ENCODE measurements at regions of chr10 and their contacts with region 1.

Region 1: DNA sequence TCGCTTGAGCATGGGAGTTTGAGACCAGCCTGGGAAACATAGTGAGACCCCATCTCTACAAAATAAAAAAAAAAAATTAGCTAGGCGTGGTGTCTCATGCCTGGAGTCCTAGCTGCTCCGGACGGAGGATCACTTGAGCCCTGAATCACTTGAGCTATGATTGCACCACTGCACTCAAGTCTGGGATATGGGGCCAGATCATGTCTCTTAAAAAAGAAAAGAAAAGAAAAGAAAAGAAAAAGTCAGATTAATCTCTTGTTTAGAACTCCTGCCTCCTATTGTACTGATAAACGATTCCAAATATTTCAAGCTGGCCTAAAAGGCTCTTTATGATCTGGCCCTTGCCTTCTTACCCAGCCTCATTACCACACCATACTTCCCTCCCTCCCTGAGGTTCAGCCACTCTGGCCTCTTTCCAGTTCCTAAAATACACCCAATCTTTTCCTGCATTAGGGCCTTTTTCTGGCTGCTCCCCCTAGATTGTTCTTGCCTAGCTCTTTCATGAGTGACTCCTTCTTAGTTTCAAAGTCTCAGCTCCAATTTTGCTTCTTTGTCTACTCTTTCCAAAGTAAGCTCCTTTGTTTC is 41.7 kb downstream of the VCL start:
- DNase-seq: peak; percentile 68 to 78
- ATAC-seq: peak; percentile 93 to 96
- H3K4me3 ChIP-seq: peak overlapping the region; percentile 22 to 46 (median 26)
- H3K27ac ChIP-seq: peak overlapping the region; percentile 93 to 97 (median 95)
- H3K4me1 ChIP-seq: peaks cover 66 to 76% of the 10 kb centered on the region in 2 donors
- H3K27me3 ChIP-seq: no peaks in the 10 kb centered on the region
- CTCF ChIP-seq: no peak
- POLR2A ChIP-seq: no peak

Region 2: DNA sequence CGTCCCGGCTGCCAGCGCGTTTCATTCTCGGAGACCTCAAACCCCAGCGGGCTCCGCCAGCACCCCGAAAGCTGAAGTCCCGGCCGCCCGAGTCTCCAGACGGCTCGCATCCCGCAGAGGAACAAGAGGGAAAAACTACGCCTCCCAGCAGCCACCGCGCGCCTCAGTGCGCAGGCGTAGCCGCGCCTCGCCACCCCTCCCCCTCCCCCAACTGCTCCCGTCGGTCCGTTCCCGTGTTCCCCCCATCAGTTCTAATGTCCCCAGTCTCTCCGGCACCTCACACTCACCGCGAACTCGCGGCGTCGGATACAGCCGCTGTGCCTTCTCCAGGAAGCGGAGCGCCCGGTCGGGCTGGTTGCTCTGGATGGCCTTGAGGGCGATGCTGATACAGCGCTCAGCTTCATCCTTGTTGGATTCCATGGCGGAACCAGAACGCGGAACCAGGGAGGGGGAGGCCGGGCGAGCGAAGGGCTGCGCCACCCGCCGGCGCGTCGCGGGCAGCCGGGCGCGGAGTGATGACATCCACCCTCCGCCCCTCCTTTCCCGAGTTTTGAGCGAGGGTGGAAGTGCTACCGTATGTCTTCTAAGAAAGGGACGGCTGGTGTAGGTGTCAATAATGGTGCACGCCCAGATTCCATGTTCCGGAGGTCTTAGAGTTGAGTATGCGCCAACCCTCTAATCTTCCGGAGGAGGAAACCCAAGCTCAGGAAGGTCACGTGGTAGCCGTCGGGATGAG is 1685.0 kb before region 1 on chr10 and contains the start of gene DNAJB12:
- in situ Hi-C with region 1: no loop called
- intact Hi-C with region 1: loop called (anchors 5 kb)
- DNase-seq: peak; percentile 75 to 85
- ATAC-seq: peak; percentile 85 to 87
- H3K4me3 ChIP-seq: peak within 1 kb of the TSS; percentile 83 to 95 (median 86)
- H3K27ac ChIP-seq: peak within 1 kb of the TSS; percentile 93 to 100 (median 98)
- H3K4me1 ChIP-seq: peaks cover 20 to 24% of the 10 kb centered on the region in 2 donors
- H3K27me3 ChIP-seq: no peaks in the 10 kb centered on the region
- CTCF ChIP-seq: peak in 1 of 5 experiments; percentile 13
- POLR2A ChIP-seq: peak; percentile 74 to 81
- total RNA-seq, gene DNAJB12: 35.8 to 49.7 (median 39.0) TPM

Region 3: DNA sequence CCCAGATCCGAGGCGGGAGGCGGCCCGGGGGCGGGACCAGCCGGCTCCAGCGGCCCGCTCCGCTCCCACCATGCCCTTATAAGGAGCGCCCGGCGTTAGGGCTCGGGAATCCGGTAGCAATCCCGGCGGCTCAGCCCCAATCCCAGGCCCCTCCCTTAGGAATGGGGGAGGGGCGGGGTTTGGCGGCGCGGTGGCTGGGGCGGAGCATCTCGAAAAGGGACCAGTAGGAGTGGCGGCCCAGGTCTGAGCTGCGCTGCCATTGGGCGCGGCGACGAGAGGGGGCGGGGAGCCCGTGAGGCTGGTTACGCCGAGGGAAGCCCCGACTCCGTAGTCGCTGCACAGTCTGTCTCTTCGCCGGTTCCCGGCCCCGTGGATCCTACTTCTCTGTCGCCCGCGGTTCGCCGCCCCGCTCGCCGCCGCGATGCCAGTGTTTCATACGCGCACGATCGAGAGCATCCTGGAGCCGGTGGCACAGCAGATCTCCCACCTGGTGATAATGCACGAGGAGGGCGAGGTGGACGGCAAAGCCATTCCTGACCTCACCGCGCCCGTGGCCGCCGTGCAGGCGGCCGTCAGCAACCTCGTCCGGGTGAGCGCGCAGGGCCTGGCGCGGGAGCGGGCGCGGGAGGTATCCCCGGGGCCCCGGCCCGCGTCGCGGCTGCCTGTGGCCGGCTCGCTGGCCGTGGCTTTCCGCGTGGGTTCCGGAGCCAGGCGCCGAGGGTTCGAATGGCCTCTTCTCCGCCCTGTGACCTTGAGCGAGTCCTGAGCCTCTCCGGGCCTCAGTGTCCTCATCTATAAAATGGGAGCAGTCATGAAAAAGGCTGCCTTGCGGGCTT is 41.6 kb before region 1 on chr10 and contains the start of gene VCL:
- in situ Hi-C with region 1: no loop called
- intact Hi-C with region 1: loop called (anchors 2 kb)
- DNase-seq: peak; percentile 98 to 99
- ATAC-seq: peak; percentile 90
- H3K4me3 ChIP-seq: peak within 1 kb of the TSS; percentile 77 to 88 (median 86)
- H3K27ac ChIP-seq: peak within 1 kb of the TSS; percentile 86 to 97 (median 92)
- H3K4me1 ChIP-seq: peaks cover 32 to 35% of the 10 kb centered on the region in 2 donors
- H3K27me3 ChIP-seq: no peaks in the 10 kb centered on the region
- CTCF ChIP-seq: no peak
- POLR2A ChIP-seq: peak; percentile 97 to 99
- total RNA-seq, gene VCL: 129 to 299 (median 210) TPM

Region 4: DNA sequence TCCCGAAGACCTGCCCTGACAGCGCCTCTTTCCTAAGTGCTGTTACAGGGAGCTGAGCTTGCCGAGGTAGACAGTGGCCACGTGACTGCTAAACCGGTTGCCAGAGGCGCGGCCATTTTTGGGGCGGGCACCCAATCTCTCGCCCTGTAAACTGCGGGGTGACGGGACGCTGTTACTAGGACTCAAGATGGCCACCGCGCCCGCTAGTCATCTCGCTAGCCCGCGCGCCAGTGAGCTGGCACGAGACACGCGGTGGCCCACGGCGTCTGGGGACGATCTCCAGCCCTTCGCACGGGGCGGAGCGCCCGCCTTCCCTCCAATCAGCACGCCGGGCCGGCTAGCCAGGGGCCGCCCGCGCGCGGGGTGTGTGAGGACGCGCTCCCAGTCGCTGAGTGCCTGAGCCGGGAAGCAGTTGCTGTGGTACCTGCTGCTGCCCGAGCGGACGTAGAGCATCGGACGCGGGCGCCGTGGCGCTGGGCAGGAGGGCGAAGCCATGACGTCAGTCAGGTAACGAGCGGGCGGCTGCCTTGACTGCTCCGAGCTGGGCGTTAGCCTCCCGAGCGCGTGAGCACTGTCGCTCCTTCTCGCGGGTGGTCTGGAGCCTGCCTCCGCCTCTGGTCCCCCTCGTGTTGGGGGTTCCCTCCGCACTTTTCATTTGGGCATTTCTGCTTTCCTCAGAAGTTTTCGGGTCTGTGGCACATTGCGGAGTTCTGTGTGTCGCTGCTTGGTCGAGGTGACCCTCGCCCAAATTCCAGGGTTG is 136.9 kb after region 1 on chr10:
- in situ Hi-C with region 1: no loop called
- intact Hi-C with region 1: no loop called
- DNase-seq: peak; percentile 91 to 97
- ATAC-seq: peak; percentile 93
- H3K4me3 ChIP-seq: peak overlapping the region; percentile 66 to 83 (median 72)
- H3K27ac ChIP-seq: peak overlapping the region; percentile 82 to 89 (median 85)
- H3K4me1 ChIP-seq: peaks cover 7 to 12% of the 10 kb centered on the region in 2 donors
- H3K27me3 ChIP-seq: no peaks in the 10 kb centered on the region
- CTCF ChIP-seq: no peak
- POLR2A ChIP-seq: peak; percentile 69 to 75